PC-3 (cell line): ENCODE measurements at regions of chr9 and their contacts with region 1.

Region 1: DNA sequence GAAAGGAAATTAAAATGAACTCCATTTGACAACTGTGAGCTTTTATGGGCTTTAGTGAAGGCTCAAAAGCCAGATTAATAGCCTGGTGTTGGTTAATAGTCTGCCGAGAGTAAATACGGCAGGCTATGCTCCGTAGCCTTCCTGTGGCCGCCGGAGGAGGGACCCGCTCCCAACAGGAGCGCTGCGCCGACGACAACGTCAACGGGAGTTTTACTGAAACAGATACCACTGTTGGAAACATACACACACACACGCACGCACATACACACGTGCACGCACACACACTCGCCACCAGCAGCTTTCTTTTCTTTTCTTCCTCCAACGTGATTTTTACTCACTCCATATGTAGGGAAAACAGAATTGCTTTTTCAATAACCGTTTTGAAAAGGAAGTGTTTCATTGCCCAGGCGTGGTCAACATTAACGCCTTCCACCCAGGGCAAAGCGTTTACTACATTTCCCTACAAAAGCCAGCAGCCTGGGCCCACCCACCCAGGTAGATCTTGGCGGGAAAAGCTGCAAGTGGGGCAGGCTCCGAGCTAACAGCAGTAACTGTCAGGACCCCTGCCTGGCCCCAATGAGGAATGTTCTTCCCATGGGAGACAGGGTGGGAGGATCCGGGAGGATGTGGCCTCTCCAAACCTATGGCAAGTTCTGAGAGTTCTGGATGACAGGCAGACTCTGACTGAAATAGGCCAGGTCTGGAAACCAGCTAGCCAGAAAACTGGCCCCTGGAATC is 72.3 kb downstream of the PAX5 start:
- DNase-seq: no peak
- ATAC-seq: no peak
- H3K4me3 ChIP-seq: no peak overlapping the region
- H3K27ac ChIP-seq: no peak overlapping the region
- H3K4me1 ChIP-seq: no peaks in the 10 kb centered on the region
- H3K27me3 ChIP-seq: peaks cover 15% of the 10 kb centered on the region
- CTCF ChIP-seq: no peak

Region 2: DNA sequence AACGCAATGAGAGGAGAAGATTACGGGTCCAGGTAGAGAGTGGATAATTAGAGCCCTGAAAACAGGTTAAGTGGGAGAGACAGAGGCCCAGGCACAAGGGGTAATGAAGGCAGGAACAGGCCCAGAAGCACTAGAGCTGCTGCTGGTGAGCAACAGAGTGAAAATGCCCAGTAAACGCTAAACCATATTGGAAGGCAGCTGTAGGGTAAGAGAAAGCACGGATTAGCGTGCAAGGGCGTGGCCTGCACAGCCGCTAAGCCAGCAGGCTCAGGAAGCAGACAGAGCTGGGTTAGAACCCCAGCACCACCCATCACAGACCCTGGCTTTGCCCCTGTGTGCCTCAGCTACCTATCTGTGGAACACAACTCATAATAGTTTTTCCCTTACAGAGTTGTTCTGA is 20.8 kb before region 1 on chr9:
- CTCF ChIA-PET with region 1: no interaction called
- POLR2A ChIA-PET with region 1: interaction called, 15 read pairs
- intact Hi-C with region 1: no loop called
- DNase-seq: no peak
- ATAC-seq: no peak
- H3K4me3 ChIP-seq: no peak overlapping the region
- H3K27ac ChIP-seq: no peak overlapping the region
- H3K4me1 ChIP-seq: no peaks in the 10 kb centered on the region
- H3K27me3 ChIP-seq: no peaks in the 10 kb centered on the region
- CTCF ChIP-seq: no peak